ENCODE measurements at regions of chr17 and their contacts with region 1.

Region 1: GRCh38 chr17:67366193-67367157 is at the start of gene PSMD12:
- DNase-seq: peak; percentile 86 to 90 (median 89)
- H3K4me3 ChIP-seq: peak within 1 kb of the TSS; percentile 81 to 96 (median 90)
- H3K4me3 Mint-ChIP-seq: peak within 1 kb of the TSS; percentile 84 to 100
- H3K27ac ChIP-seq: peak within 1 kb of the TSS; percentile 80 to 96
- H3K27ac Mint-ChIP-seq: peak within 1 kb of the TSS; percentile 95 to 99 (median 96)
- H3K4me1 ChIP-seq: peaks cover 34 to 36% of the 10 kb centered on the region in 2 donors
- H3K4me1 Mint-ChIP-seq: peaks cover 48% of the 10 kb centered on the region
- H3K27me3 ChIP-seq: no peaks in the 10 kb centered on the region
- H3K27me3 Mint-ChIP-seq: peaks cover 0 to 3% (median 0%) of the 10 kb centered on the region in 3 donors
- CTCF ChIP-seq: no peak
- polyA plus RNA-seq, gene PSMD12: 16.2 to 30.7 (median 17.8) TPM

Region 2: DNA sequence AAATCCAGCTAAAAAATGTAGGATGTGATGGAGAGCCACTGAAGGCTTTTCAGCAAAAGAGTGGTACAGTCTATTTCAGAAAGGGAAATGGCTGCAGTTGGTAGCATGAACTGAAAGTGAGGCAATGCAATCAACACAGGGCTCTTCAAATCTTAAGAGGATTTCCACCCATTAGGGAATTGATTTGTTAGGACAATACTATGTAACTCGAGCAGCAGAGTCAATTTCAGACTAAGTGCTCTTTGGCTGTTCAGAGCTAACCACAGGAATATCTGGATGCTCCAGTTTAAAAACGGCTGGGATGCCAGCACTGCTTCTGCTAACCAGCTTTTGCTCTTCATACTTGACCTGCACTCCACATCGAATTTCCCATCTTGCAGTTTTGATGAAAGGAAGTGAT is 297.5 kb before region 1 on chr17:
- intact Hi-C with region 1: no loop called
- DNase-seq: no peak
- H3K4me3 ChIP-seq: no peak overlapping the region
- H3K4me3 Mint-ChIP-seq: no peak overlapping the region
- H3K27ac ChIP-seq: no peak overlapping the region
- H3K27ac Mint-ChIP-seq: peak overlapping the region in 1 of 7 donors; percentile 65
- H3K4me1 ChIP-seq: no peaks in the 10 kb centered on the region
- H3K4me1 Mint-ChIP-seq: no peaks in the 10 kb centered on the region
- H3K27me3 ChIP-seq: no peaks in the 10 kb centered on the region
- H3K27me3 Mint-ChIP-seq: no peaks in the 10 kb centered on the region
- CTCF ChIP-seq: no peak

Region 3: GRCh38 chr17:67245073-67245755 is 121.3 kb before region 1 on chr17 and contains the start of gene HELZ:
- intact Hi-C with region 1: loop called in 1 of 2 experiments (anchors 10 kb)
- DNase-seq: peak; percentile 68 to 71 (median 68)
- H3K4me3 ChIP-seq: peak within 1 kb of the TSS; percentile 92 to 98 (median 92)
- H3K4me3 Mint-ChIP-seq: peak within 1 kb of the TSS; percentile 88 to 91
- H3K27ac ChIP-seq: peak within 1 kb of the TSS; percentile 65 to 96
- H3K27ac Mint-ChIP-seq: peak within 1 kb of the TSS; percentile 85 to 94 (median 90)
- H3K4me1 ChIP-seq: peaks cover 31 to 52% of the 10 kb centered on the region in 2 donors
- H3K4me1 Mint-ChIP-seq: peaks cover 52% of the 10 kb centered on the region
- H3K27me3 ChIP-seq: no peaks in the 10 kb centered on the region
- H3K27me3 Mint-ChIP-seq: no peaks in the 10 kb centered on the region
- CTCF ChIP-seq: no peak
- polyA plus RNA-seq, gene HELZ: 24.8 to 44.1 (median 39.9) TPM

Region 4: DNA sequence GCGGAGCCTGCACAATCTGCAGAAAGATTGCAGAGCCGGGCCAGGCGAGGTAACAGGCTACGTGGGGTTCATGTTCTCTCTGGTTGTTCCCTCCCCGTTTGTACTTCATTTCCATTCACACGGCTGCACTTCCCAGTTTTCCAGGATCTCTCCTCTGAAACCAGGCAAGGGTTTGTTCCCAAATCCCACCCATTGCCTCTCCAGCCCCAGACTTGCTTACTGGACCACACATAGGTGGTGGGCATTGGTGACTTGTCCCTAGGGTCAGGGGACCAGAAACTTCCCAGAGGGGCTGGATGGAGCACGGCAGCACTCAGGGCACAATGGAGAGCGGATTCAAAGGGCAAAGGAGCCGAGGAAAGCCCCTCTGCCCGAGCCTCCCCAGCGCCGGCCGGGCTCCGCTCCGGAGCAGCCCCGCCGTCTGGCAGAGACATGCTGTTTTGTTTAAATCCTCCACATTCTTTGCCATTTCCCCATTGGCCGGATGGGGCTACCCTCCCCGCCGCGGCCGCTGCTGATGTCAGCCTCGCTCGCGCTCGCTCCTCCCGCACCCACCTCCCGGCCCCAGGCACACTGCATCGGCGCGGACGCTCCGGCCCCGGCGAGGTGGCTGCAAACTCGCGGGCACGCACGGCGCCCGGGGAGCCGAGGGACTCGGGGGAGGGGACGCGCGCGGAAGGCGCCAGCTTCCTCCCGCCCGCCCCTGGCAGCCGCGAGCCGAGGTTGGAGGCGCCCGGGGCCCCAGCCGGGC is 10.4 kb after region 1 on chr17 and contains the start of gene PITPNC1:
- intact Hi-C with region 1: no loop called
- DNase-seq: peak; percentile 71 to 79 (median 73)
- H3K4me3 ChIP-seq: peak within 1 kb of the TSS; percentile 87 to 99 (median 93)
- H3K4me3 Mint-ChIP-seq: peak within 1 kb of the TSS; percentile 90 to 93
- H3K27ac ChIP-seq: peak within 1 kb of the TSS; percentile 83 to 92
- H3K27ac Mint-ChIP-seq: peak within 1 kb of the TSS; percentile 84 to 93 (median 91)
- H3K4me1 ChIP-seq: peaks cover 24 to 25% of the 10 kb centered on the region in 2 donors
- H3K4me1 Mint-ChIP-seq: peaks cover 35% of the 10 kb centered on the region
- H3K27me3 ChIP-seq: no peaks in the 10 kb centered on the region
- H3K27me3 Mint-ChIP-seq: peaks cover 0 to 14% (median 0%) of the 10 kb centered on the region in 3 donors
- CTCF ChIP-seq: no peak
- polyA plus RNA-seq, gene PITPNC1: 18.5 to 31.0 (median 21.7) TPM

Region 5: DNA sequence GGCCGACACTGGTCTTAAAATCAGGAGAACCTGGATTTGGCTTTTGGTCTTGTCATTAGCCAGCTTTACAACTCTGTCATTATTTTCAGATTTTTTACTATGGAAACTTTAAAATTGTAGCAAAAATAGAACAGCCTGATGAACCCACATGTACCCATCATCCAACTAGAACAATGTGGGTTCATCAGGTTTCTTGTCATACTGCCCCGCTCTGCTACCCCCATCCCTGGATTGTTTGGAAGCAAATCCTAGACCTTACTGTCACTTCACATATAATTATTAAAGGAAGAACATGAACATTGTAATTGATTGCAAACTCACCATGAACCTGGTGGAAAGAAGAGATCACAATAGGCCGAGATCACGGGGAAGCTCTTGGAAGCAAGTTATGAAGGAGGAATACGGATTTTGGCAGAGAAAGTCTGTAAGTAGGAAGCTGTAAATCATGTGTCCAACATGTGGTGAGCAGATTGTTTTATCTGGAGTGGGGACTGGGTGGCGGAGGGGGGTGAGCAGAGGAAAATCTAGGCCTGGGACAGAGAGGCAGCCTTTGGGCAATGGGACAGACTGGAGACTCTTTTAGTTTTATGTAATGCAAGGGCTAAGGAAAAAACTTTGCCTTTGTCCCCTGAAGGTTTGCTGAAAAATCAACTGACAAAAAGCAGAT is 77.6 kb after region 1 on chr17:
- intact Hi-C with region 1: no loop called
- DNase-seq: no peak
- H3K4me3 ChIP-seq: no peak overlapping the region
- H3K4me3 Mint-ChIP-seq: no peak overlapping the region
- H3K27ac ChIP-seq: no peak overlapping the region
- H3K27ac Mint-ChIP-seq: peak overlapping the region in 2 of 7 donors; percentile 4 to 26
- H3K4me1 ChIP-seq: peaks cover 29 to 33% of the 10 kb centered on the region in 2 donors
- H3K4me1 Mint-ChIP-seq: peaks cover 42% of the 10 kb centered on the region
- H3K27me3 ChIP-seq: no peaks in the 10 kb centered on the region
- H3K27me3 Mint-ChIP-seq: peaks cover 0 to 4% (median 2%) of the 10 kb centered on the region in 3 donors
- CTCF ChIP-seq: no peak